HepG2 (cell line): ENCODE measurements at regions of chr6 and their contacts with region 1.

Region 1: GRCh38 chr6:31834434-31835198 is 7.1 kb downstream of the HSPA1B start:
- DNase-seq: peak; percentile 92
- ATAC-seq: peak; percentile 85
- H3K4me3 ChIP-seq: peak overlapping the region; percentile 75 to 98 (median 93)
- H3K27ac ChIP-seq: peak overlapping the region; percentile 93
- H3K4me1 ChIP-seq: peaks cover 56% of the 10 kb centered on the region
- H3K27me3 ChIP-seq: peaks cover 0 to 2% of the 10 kb centered on the region in 2 experiments; a peak in 1 of 5 replicates
- CTCF ChIP-seq: no peak
- EP300 ChIP-seq: no peak
- POLR2A ChIP-seq: peak; percentile 97 to 99
- RAD21 ChIP-seq: peak; percentile 28; the same call in 1 of the 2 replicates

Region 2: GRCh38 chr6:31652925-31653718 is 181.5 kb before region 1 on chr6:
- CTCF ChIA-PET with region 1: no interaction called
- POLR2A ChIA-PET with region 1: interaction called, 16 read pairs
- in situ Hi-C with region 1: no loop called
- intact Hi-C with region 1: no loop called
- DNase-seq: peak; percentile 98
- ATAC-seq: peak; percentile 55
- H3K4me3 ChIP-seq: peak overlapping the region; percentile 73 to 88 (median 77)
- H3K27ac ChIP-seq: peak overlapping the region; percentile 96
- H3K4me1 ChIP-seq: peaks cover 70% of the 10 kb centered on the region
- H3K27me3 ChIP-seq: no peaks in the 10 kb centered on the region; a peak in 2 of 5 replicates
- CTCF ChIP-seq: peak; percentile 63
- EP300 ChIP-seq: no peak; a peak in 3 of 4 replicates
- POLR2A ChIP-seq: peak in 1 of 2 experiments; percentile 72; a peak in 1 of 4 replicates
- RAD21 ChIP-seq: 0 out of 2 replicates have a peak, but pooled peaks have one; percentile 7

Region 3: DNA sequence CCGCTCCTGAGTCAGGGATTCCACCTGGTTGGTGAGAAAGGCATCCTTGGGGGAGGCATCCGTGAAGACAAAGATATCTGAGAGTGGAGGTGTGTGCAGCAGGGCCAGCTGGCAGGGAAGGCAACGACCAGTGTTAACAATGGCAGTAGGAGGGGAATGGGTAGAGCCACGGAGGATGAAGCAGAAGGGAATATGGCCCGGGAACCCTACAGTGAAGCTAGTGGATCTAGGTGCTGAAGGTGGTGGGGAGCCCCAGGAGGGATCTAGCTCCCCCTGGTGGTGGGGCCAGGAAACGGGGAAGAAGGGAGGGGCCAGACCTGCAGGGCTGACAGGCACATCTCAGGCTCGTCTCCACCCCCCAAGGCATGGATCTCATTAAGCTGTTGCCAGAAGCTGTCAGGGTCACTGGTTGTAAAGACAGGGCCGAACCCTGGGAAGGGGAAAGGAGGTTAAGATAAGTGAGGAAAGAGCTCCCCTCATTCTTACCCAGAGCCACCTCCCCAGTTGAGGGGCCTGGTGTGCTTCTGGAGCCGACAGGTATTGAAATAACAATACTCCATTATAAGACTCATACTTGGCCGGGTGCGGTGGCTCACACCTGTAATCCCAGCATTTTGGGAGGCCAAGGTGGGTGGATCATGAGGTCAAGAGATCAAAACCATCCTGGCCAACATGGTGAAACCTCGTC is 64.8 kb before region 1 on chr6:
- CTCF ChIA-PET with region 1: interaction called, 16 read pairs
- POLR2A ChIA-PET with region 1: interaction called, 53 read pairs
- in situ Hi-C with region 1: loop called (anchors 5 kb)
- intact Hi-C with region 1: loop called (anchors 1 kb)
- DNase-seq: peak; percentile 71
- ATAC-seq: peak; percentile 61
- H3K4me3 ChIP-seq: no peak overlapping the region
- H3K27ac ChIP-seq: no peak overlapping the region
- H3K4me1 ChIP-seq: peaks cover 44% of the 10 kb centered on the region
- H3K27me3 ChIP-seq: no peaks in the 10 kb centered on the region
- CTCF ChIP-seq: peak; percentile 98
- EP300 ChIP-seq: no peak
- POLR2A ChIP-seq: no peak
- RAD21 ChIP-seq: peak; percentile 96

Region 4: GRCh38 chr6:31806465-31807272 is 27.9 kb before region 1 on chr6 and contains the start of gene LSM2:
- CTCF ChIA-PET with region 1: no interaction called
- POLR2A ChIA-PET with region 1: interaction called, 25 read pairs
- in situ Hi-C with region 1: no loop called
- intact Hi-C with region 1: no loop called
- DNase-seq: peak; percentile 96
- ATAC-seq: peak; percentile 92
- H3K4me3 ChIP-seq: peak within 1 kb of the TSS; percentile 82 to 90 (median 84)
- H3K27ac ChIP-seq: peak within 1 kb of the TSS; percentile 94
- H3K4me1 ChIP-seq: peaks cover 37% of the 10 kb centered on the region
- H3K27me3 ChIP-seq: no peaks in the 10 kb centered on the region
- CTCF ChIP-seq: peak; percentile 89
- EP300 ChIP-seq: peak in 1 of 2 experiments; percentile 43; a peak in 2 of 4 replicates
- POLR2A ChIP-seq: peak; percentile 75 to 89
- RAD21 ChIP-seq: peak; percentile 69
- total RNA-seq, gene LSM2: 90.5 and 93.7 TPM in 2 replicates

Region 5: GRCh38 chr6:31851485-31851832 is 16.8 kb after region 1 on chr6:
- CTCF ChIA-PET with region 1: no interaction called
- POLR2A ChIA-PET with region 1: interaction called, 52 read pairs
- in situ Hi-C with region 1: no loop called
- intact Hi-C with region 1: no loop called
- DNase-seq: no peak
- ATAC-seq: peak; percentile 9
- H3K4me3 ChIP-seq: no peak overlapping the region
- H3K27ac ChIP-seq: peak overlapping the region; percentile 43
- H3K4me1 ChIP-seq: peaks cover 35% of the 10 kb centered on the region
- H3K27me3 ChIP-seq: no peaks in the 10 kb centered on the region
- CTCF ChIP-seq: no peak
- EP300 ChIP-seq: no peak
- POLR2A ChIP-seq: no peak
- RAD21 ChIP-seq: no peak